Mammary epithelial cell (primary cell): ENCODE measurements at regions of chr11 and their contacts with region 1.

Region 1: GRCh38 chr11:110829873-110830272 is 117.6 kb upstream of the ARHGAP20 start:
- DNase-seq: no peak
- H3K4me3 ChIP-seq: no peak overlapping the region
- H3K27ac ChIP-seq: no peak overlapping the region
- H3K4me1 ChIP-seq: no peaks in the 10 kb centered on the region
- H3K27me3 ChIP-seq: no peaks in the 10 kb centered on the region
- CTCF ChIP-seq: no peak

Region 2: DNA sequence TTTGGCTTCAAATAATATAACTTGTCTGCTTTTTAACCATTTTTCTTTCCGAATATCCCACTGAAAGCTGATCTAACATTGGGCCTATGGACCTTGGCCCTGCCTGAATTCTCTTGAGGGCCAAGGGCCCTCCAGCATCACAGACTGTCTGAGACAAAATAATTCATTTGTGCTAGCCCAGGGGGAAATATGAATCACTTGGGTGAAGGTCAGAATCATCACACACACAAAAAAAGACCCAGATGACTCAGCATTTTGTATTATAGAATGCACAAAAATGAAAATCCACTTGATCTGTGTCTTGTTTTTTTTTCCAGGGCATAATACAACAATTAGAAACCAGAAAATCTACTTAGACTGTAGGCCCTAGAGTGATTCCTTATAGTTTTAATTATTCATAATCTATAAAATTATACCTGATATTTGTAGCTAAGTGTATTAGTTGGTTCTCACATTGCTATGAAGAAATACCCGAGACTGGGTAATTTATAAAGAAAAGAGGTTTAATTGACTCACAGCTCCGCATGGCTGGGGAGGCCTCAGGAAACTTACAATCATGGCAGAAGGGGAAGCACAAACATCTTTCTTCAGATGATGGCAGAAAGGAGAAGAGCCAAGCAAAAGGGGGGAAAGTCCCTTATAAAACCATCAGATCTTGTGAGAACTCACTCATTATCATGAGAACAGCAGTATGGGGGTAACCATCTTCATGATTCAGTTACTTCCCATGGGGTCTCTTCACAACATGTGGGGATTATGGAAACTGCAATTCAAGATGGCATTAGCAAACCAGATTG is 517.9 kb before region 1 on chr11:
- CTCF ChIA-PET with region 1: no interaction called
- dilution Hi-C with region 1: no loop called
- in situ Hi-C with region 1: no loop called
- intact Hi-C with region 1: no loop called
- DNase-seq: no peak
- H3K4me3 ChIP-seq: no peak overlapping the region
- H3K27ac ChIP-seq: peak overlapping the region; percentile 1
- H3K4me1 ChIP-seq: peaks cover 9% of the 10 kb centered on the region
- H3K27me3 ChIP-seq: no peaks in the 10 kb centered on the region
- CTCF ChIP-seq: no peak

Region 3: GRCh38 chr11:110763249-110764011 is 66.4 kb before region 1 on chr11:
- CTCF ChIA-PET with region 1: no interaction called
- dilution Hi-C with region 1: no loop called
- in situ Hi-C with region 1: no loop called
- intact Hi-C with region 1: no loop called
- DNase-seq: no peak
- H3K4me3 ChIP-seq: no peak overlapping the region
- H3K27ac ChIP-seq: no peak overlapping the region
- H3K4me1 ChIP-seq: no peaks in the 10 kb centered on the region
- H3K27me3 ChIP-seq: peaks cover 4% of the 10 kb centered on the region
- CTCF ChIP-seq: no peak

Region 4: DNA sequence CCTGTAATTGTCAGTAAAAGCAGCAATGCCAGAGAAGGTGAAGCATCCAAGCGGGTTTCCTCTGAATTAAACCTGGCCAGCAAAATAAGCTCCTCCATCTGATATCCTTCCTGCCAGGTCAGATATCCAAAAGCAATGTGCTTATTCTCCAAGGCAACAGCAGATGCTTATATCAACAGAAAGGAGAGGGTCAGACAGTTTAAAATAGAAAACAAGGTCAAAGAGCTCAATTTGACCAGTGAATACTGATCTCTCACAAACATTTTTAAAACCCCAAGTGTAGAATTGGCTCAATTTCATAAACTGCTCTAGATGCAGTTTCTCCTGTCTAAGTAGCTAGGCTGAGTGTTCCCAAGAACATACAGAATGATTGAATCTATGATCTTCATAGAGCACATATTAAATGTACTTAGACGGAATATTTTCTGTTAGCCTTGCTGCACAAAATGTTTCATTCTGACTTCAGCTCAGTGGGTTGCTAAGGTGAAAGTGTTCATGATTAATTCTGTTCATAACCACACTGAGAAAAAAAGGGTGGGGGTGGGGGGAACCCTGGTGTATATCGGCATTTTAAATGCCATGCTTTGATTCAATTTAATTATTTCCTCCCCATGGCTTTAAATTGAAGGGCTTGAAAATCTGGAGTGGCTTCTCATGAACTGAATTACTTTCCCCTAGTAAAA is 56.6 kb after region 1 on chr11:
- CTCF ChIA-PET with region 1: no interaction called
- dilution Hi-C with region 1: loop called (anchors 5 kb)
- in situ Hi-C with region 1: no loop called
- intact Hi-C with region 1: no loop called
- DNase-seq: no peak
- H3K4me3 ChIP-seq: no peak overlapping the region
- H3K27ac ChIP-seq: no peak overlapping the region
- H3K4me1 ChIP-seq: no peaks in the 10 kb centered on the region
- H3K27me3 ChIP-seq: peaks cover 14% of the 10 kb centered on the region
- CTCF ChIP-seq: no peak